Sciatic nerve (tissue), 2 donors: ENCODE measurements at regions of chr13 and their contacts with region 1.

Region 1: DNA sequence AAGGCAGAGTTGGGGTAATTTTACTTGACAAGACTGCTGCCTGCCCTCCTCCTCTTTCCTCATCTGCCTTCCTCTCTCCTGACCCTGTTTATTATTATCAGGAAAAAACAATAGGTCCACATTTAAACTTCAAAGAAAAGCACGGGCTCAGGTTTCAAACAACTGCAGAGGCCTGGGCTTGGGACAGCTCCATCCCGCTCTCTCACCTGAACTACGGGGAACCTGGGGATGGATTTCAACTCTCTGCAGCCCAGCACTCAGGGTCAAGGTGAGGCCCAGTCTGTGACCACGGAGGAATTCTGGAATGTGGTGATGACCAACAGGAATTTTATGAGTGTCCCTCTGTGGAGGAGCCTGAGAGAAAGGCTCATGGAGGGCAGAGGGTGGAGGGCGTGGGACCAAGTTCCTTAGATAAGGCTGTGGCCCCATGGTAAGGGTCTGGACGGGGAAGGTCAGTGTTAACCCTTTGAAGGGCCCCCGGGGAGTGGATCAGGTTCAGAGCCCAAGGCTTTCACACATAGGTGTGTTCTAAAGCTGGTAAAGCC is 220.8 kb upstream of the MAB21L1 start:
- DNase-seq: no peak
- ATAC-seq: no peak

Region 2: GRCh38 chr13:35720690-35721554 is 23.7 kb after region 1 on chr13:
- intact Hi-C with region 1: no loop called
- DNase-seq: peak; percentile 68
- ATAC-seq: no peak

Region 3: DNA sequence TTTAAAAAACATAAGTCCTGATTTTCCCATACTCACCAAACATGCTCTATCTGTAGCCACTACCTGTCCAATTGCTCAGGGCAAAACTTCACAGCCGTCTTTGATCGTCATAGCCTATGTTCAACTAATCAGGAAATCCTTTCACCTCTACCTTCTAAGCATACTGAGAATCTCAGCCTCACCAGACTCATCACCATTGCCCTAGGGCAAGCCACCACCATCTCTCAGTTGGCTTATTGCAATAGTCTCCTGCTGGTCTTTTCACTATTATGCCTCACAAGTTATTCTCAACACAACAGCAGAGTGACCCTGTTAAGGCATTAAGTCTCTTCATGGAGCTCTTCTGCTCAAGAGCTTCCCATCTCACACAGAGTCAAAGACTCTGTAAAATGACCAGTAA is 39.6 kb after region 1 on chr13:
- intact Hi-C with region 1: loop called (anchors 1 kb)
- DNase-seq: no peak
- ATAC-seq: no peak